ENCODE measurements at regions of chr2 and their contacts with region 1.

Region 1: GRCh38 chr2:61016808-61017555 is 538 bp upstream of the PEX13 start:
- DNase-seq: peak; percentile 94
- H3K4me3 ChIP-seq: peak overlapping the region; percentile 71 to 96 (median 79)
- H3K27ac ChIP-seq: peak overlapping the region; percentile 85
- H3K4me1 ChIP-seq: peaks cover 14% of the 10 kb centered on the region
- H3K27me3 ChIP-seq: no peaks in the 10 kb centered on the region
- CTCF ChIP-seq: no peak

Region 2: GRCh38 chr2:61065715-61066709 is 49.0 kb after region 1 on chr2 and contains the start of gene SANBR:
- CTCF ChIA-PET with region 1: no interaction called
- dilution Hi-C with region 1: no loop called
- in situ Hi-C with region 1: no loop called
- intact Hi-C with region 1: loop called (anchors 5 kb)
- DNase-seq: peak; percentile 85
- H3K4me3 ChIP-seq: peak within 1 kb of the TSS; percentile 75 to 94 (median 82)
- H3K27ac ChIP-seq: peak within 1 kb of the TSS; percentile 54
- H3K4me1 ChIP-seq: peaks cover 8% of the 10 kb centered on the region
- H3K27me3 ChIP-seq: no peaks in the 10 kb centered on the region
- CTCF ChIP-seq: no peak
- total RNA-seq, gene SANBR: 11.8 to 12.8 TPM